ENCODE measurements at regions of chr7 and their contacts with region 1.

Region 1: GRCh38 chr7:127745445-127745844 is 93.5 kb downstream of the SND1 start:
- DNase-seq: no peak
- H3K4me3 Mint-ChIP-seq: no peak overlapping the region
- H3K27ac Mint-ChIP-seq: no peak overlapping the region
- H3K4me1 Mint-ChIP-seq: peaks cover 7% of the 10 kb centered on the region
- H3K27me3 Mint-ChIP-seq: no peaks in the 10 kb centered on the region
- CTCF ChIP-seq: no peak

Region 2: DNA sequence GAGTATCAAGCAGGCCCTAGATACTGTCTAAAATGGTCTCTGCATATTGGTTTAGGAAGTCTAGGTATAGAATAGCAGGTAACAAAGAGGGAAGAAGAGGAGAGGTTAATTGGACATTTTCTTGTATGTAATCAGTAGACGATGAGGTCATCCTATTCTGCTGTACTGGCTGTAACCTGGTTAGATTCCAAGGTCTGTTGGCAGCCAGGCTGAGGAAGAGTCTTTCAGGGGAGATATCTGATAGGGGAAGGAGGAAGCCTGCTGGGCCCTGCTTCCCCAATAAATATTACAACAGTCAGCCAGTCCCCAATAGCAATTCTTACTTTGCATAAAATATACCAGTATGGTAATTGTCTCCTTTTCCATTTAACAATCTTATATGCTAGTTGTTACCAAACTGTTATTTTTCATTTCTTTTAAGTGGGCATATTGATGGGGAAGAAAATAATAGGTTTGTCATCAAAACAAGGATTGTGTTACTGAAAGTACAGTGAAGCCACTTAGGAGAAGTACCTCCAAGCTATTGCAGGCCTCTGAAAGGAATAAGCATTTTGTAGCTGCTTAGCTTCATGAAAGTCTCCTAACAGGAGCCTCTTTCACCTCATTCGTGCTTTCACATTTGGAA is 99.4 kb after region 1 on chr7:
- CTCF ChIA-PET with region 1: no interaction called
- POLR2A ChIA-PET with region 1: no interaction called
- intact Hi-C with region 1: loop called (anchors 10 kb)
- DNase-seq: peak; percentile 17
- H3K4me3 Mint-ChIP-seq: no peak overlapping the region
- H3K27ac Mint-ChIP-seq: peak overlapping the region; percentile 53
- H3K4me1 Mint-ChIP-seq: peaks cover 13% of the 10 kb centered on the region
- H3K27me3 Mint-ChIP-seq: no peaks in the 10 kb centered on the region
- CTCF ChIP-seq: no peak

Measured in MCF 10A (cell line).